ENCODE measurements at regions of chr6 and their contacts with region 1.

Region 1: GRCh38 chr6:14210663-14211561 is 93.3 kb downstream of the CD83 start:
- DNase-seq: peak; percentile 90
- ATAC-seq: peak; percentile 98
- H3K4me3 ChIP-seq: peak overlapping the region; percentile 72
- H3K27ac ChIP-seq: peak overlapping the region; percentile 94
- H3K4me1 ChIP-seq: peaks cover 6% of the 10 kb centered on the region; the same call in 1 of the 2 replicates
- H3K27me3 ChIP-seq: no peaks in the 10 kb centered on the region
- CTCF ChIP-seq: peak; percentile 91
- POLR2A ChIP-seq: peak; percentile 75
- RAD21 ChIP-seq: peak; percentile 98

Region 2: DNA sequence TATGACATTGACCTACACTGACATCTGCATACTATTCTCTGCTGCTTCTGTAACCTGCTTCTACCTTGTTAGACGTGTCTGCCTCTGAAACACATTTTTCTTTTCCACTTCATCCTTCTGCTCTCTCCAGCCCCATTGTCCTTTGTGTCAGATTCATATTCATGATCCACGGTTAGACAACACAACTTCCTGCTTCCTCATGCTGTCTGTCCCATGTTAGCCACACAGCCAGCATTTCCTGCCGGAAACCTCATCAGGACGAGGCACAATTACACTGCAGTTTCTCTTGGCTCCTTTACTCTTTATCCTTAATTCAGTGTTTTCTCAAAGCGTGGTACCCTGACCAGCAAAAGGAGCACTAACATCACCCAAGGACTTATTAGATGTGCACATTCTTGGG is 1032.8 kb before region 1 on chr6:
- CTCF ChIA-PET with region 1: no interaction called
- POLR2A ChIA-PET with region 1: no interaction called
- dilution Hi-C with region 1: no loop called
- in situ Hi-C with region 1: no loop called
- intact Hi-C with region 1: no loop called
- DNase-seq: no peak
- ATAC-seq: no peak
- H3K4me3 ChIP-seq: no peak overlapping the region
- H3K27ac ChIP-seq: no peak overlapping the region
- H3K4me1 ChIP-seq: no peaks in the 10 kb centered on the region; the same call in 1 of the 2 replicates
- H3K27me3 ChIP-seq: 0 out of 2 replicates have a peak, but pooled peaks cover 2% of the 10 kb centered on the region
- CTCF ChIP-seq: no peak
- POLR2A ChIP-seq: no peak
- RAD21 ChIP-seq: no peak

Region 3: DNA sequence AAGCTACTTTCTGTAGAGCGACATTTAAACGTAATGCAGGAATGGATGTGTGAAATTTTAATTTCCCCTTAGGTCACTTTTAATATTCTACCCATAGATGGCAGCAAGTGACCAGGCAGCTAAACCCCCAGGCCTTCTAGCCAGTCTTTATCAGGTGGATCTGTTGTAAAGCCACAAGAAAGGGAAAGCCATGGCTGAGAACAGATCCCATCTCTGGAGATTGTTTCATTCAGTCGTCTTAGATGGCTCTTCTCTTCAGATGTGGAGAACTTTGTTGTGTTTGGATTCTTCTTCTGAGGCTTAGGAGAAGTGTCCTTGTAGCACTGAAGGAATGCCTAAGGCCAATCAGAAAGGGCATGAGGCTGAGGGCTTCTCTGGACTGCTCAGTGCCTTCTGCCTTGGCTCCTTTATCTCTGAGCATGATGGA is 301.9 kb before region 1 on chr6:
- CTCF ChIA-PET with region 1: no interaction called
- POLR2A ChIA-PET with region 1: no interaction called
- dilution Hi-C with region 1: no loop called
- in situ Hi-C with region 1: no loop called
- intact Hi-C with region 1: loop called (anchors 5 kb)
- DNase-seq: peak; percentile 74
- ATAC-seq: peak; percentile 94
- H3K4me3 ChIP-seq: no peak overlapping the region
- H3K27ac ChIP-seq: no peak overlapping the region
- H3K4me1 ChIP-seq: no peaks in the 10 kb centered on the region
- H3K27me3 ChIP-seq: peaks cover 11% of the 10 kb centered on the region
- CTCF ChIP-seq: peak; percentile 94
- POLR2A ChIP-seq: peak; percentile 53; the same call in 1 of the 2 replicates
- RAD21 ChIP-seq: peak; percentile 98

Region 4: DNA sequence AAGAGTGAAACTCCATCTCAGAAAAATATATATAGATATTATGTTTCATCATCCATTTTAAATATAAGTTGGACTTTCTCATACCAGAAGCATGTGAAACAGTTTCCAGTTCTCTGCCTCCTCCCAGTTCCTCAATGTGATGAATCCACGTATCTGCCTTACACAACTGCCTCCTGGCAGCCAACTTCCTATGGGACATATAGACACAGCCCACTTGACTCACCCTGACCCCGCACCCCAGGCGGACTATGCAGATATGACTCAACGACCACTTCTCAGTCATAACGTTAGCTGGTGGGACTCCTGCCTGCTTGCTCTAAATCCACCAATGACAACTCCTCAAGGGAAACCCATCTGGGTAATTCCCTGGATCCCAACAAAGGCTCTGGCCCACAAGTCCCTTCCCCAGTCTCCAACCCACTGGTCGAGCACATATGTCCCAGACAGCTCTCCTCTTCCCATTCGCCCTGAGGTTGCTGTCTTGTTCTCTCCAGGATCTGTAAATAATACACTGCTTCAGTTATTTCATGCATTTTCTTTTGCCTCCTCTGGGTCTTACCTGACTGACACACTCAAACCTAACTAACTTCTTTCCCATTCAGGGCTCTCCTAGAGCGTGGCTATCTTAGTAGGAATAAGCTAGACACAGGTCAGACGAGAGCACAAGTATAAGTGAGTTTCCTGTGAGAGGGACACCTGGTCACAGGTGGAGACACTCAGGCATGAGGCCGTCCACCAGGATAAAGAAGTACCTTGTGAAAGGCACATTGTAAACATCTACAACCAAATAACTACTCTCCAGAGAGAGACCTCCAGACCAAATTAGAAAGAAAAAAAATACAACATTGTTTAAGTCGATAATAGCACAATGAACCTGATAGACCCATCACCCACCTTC is 455.2 kb after region 1 on chr6:
- CTCF ChIA-PET with region 1: no interaction called
- POLR2A ChIA-PET with region 1: no interaction called
- dilution Hi-C with region 1: no loop called
- in situ Hi-C with region 1: no loop called
- intact Hi-C with region 1: loop called (anchors 10 kb)
- DNase-seq: peak; percentile 100
- ATAC-seq: peak; percentile 96
- H3K4me3 ChIP-seq: no peak overlapping the region
- H3K27ac ChIP-seq: 0 out of 2 replicates have a peak overlapping the region, but pooled peaks have one; percentile 3
- H3K4me1 ChIP-seq: peaks cover 16% of the 10 kb centered on the region
- H3K27me3 ChIP-seq: peaks cover 2% of the 10 kb centered on the region; the same call in 1 of the 2 replicates
- CTCF ChIP-seq: no peak
- POLR2A ChIP-seq: peak; percentile 92
- RAD21 ChIP-seq: peak; percentile 36

Region 5: GRCh38 chr6:14841901-14842421 is 631.0 kb after region 1 on chr6:
- CTCF ChIA-PET with region 1: no interaction called
- POLR2A ChIA-PET with region 1: no interaction called
- dilution Hi-C with region 1: no loop called
- in situ Hi-C with region 1: loop called (anchors 25 kb)
- intact Hi-C with region 1: loop called (anchors 2 kb)
- DNase-seq: peak; percentile 100
- ATAC-seq: peak; percentile 91
- H3K4me3 ChIP-seq: no peak overlapping the region
- H3K27ac ChIP-seq: peak overlapping the region; percentile 59; the same call in 1 of the 2 replicates
- H3K4me1 ChIP-seq: peaks cover 7% of the 10 kb centered on the region
- H3K27me3 ChIP-seq: no peaks in the 10 kb centered on the region
- CTCF ChIP-seq: no peak
- POLR2A ChIP-seq: no peak
- RAD21 ChIP-seq: peak; percentile 12

Region 6: DNA sequence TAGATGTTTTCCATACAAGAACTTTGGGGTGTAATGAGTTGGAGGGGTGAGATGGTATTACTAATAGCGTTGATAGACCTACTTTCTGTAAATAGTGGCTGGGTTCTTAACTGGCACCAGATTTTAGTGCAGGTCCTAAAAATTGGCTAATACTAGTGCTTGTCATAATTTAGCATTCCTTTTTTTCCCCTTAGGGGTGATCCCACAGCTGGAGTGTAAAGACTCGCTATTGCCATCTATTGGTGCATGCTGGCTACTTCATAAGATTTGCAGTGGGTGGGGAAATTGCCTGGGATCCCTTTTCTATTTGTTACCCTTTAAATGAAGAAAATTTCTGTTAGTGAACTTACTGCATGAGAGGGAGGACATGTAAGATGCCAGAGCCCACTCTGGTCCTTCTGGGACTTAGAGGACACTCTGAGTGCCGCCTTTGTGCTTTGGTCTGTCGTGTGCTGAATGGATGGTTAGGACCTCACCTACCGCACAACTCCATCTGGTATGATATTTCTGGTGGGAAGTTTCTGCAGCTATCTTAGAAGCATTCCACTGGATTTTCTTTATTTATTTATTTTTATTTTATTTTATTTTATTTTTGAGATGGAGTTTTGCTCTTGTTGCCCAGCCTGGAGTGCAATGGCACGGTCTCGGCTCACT is 1230.4 kb after region 1 on chr6:
- CTCF ChIA-PET with region 1: no interaction called
- POLR2A ChIA-PET with region 1: no interaction called
- dilution Hi-C with region 1: no loop called
- in situ Hi-C with region 1: no loop called
- intact Hi-C with region 1: loop called (anchors 5 kb)
- DNase-seq: peak; percentile 78
- ATAC-seq: peak; percentile 63
- H3K4me3 ChIP-seq: no peak overlapping the region
- H3K27ac ChIP-seq: no peak overlapping the region
- H3K4me1 ChIP-seq: peaks cover 19% of the 10 kb centered on the region
- H3K27me3 ChIP-seq: no peaks in the 10 kb centered on the region
- CTCF ChIP-seq: peak; percentile 84
- POLR2A ChIP-seq: no peak
- RAD21 ChIP-seq: peak; percentile 83

Region 7: DNA sequence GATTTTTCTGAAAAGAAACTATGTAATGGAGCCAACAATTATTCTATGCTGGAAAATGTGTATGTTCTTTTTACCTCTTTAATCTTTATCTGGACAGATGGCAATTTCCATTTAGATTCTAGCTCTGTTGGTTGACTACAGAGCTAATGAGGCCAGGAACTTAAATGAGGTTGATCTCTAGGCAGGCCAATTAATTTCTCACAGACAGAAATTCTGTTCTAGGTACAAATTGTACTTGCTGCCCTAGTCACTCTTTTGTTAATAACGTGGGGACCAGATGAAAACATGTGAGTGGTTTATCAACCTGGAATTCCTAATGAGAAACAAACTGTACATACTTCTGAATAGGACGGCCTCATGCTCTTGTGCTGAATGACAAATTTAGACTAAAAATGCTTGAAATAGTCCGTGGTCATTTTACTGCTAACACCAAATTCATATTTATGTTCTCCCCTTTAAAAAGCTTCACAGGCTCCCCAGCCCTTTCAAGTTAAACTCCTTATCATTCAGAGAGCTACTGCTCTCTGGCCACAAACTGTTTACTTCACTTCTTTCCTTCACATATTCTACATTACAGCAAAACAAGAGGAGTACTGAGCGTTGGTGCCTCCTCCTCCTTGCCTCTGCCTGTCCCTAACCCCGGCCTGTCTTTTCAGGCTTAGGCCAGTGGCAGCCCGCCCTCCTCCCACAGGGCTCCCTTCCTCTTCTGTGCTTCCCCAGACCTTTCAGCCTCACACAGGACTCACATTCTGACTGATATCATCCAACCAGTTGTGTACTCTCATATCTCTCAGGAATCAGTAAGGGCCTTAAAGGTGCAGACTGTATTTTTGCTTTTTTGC is 1410.5 kb after region 1 on chr6:
- CTCF ChIA-PET with region 1: no interaction called
- POLR2A ChIA-PET with region 1: no interaction called
- dilution Hi-C with region 1: no loop called
- in situ Hi-C with region 1: loop called (anchors 25 kb)
- intact Hi-C with region 1: loop called (anchors 5 kb)
- DNase-seq: peak; percentile 30
- ATAC-seq: peak; percentile 72
- H3K4me3 ChIP-seq: no peak overlapping the region
- H3K27ac ChIP-seq: no peak overlapping the region
- H3K4me1 ChIP-seq: peaks cover 7% of the 10 kb centered on the region
- H3K27me3 ChIP-seq: no peaks in the 10 kb centered on the region
- CTCF ChIP-seq: no peak
- POLR2A ChIP-seq: no peak
- RAD21 ChIP-seq: no peak